ENCODE measurements at regions of chr13 and their contacts with region 1.

Region 1: DNA sequence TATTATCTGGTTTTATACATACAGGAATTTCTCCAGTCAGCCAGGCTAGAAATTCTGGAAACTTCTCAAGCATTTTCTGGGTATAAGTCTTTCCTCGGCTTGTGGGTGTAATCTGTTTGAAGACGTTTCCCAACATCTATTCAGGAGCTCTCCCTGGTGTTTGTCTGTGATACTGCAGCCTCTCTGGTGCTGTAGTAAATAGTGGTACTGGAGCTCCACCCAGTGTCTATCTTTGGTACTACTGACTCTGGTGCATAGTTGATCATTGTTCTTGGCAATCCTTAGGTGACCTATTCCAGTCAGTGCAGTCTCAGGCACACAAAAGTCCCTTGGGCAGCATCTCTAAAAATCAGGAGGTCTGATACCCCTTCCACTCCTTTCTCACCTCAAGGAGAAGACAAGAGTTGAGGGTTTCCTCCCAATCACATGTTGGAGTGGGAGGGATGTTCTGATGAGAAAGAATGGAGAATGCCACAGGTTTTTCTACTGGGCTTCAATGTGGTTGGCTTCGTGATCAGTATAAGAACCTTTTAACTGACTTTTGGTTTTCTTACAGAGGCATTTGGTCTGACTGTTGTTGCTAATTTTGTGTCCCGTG is 115.5 kb downstream of the CYSLTR2 start:
- DNase-seq: peak; percentile 88
- H3K4me3 Mint-ChIP-seq: no peak overlapping the region
- H3K27ac Mint-ChIP-seq: no peak overlapping the region
- H3K4me1 Mint-ChIP-seq: peaks cover 26% of the 10 kb centered on the region
- H3K27me3 Mint-ChIP-seq: peaks cover 26% of the 10 kb centered on the region

Region 2: DNA sequence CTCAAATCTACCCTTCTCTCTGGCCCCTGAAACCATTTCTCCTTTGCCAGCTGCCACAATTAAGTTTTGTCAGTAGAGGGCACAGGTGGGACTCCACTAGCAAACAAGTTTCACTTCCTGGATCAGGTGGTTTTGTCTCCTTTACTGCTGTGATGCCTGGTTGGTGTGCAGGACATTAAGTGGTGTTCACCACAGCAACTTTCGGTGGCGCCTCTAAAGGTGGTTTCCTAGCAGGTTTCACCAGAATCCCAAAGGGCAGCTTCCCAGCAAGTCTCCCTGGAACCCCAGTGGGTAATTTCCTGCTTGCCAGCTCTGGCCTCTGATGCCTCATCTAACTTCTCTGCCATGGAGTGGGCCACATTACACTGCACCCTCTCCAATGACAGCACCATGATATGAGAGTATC is 691.0 kb before region 1 on chr13:
- CTCF ChIA-PET with region 1: interaction called, 11 read pairs
- DNase-seq: peak; percentile 53
- H3K4me3 Mint-ChIP-seq: no peak overlapping the region
- H3K27ac Mint-ChIP-seq: peak overlapping the region; percentile 52
- H3K4me1 Mint-ChIP-seq: peaks cover 9% of the 10 kb centered on the region
- H3K27me3 Mint-ChIP-seq: no peaks in the 10 kb centered on the region

Region 3: DNA sequence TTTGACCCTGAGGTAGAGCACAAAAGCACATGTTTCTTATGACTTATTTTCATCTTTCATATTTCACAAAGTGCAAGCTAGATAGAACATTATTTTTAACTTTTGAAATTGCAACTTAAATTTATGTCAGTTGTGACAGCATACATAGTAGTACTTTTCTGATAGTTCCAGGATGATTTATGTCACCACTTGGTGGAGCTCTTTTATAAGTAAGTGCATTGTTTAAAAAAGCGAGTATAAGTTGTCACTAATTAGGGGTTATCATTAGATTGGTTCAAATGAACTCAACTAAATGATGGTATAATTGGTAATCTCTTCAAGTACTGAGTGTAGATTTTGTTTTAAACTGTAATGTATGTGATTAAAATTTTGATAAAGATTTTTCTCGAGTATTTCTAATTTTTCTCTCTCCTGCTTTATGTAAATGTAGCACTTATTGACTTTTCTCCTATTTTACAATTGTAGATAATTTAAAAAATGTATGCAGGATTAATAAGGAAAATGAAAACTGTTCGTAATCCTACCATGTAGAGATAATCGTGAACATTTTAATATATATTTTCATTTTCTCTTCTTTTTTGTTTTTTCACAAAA is 434.6 kb before region 1 on chr13:
- CTCF ChIA-PET with region 1: interaction called, 20 read pairs
- DNase-seq: no peak
- H3K4me3 Mint-ChIP-seq: no peak overlapping the region
- H3K27ac Mint-ChIP-seq: no peak overlapping the region
- H3K4me1 Mint-ChIP-seq: peaks cover 26% of the 10 kb centered on the region
- H3K27me3 Mint-ChIP-seq: no peaks in the 10 kb centered on the region

Region 4: DNA sequence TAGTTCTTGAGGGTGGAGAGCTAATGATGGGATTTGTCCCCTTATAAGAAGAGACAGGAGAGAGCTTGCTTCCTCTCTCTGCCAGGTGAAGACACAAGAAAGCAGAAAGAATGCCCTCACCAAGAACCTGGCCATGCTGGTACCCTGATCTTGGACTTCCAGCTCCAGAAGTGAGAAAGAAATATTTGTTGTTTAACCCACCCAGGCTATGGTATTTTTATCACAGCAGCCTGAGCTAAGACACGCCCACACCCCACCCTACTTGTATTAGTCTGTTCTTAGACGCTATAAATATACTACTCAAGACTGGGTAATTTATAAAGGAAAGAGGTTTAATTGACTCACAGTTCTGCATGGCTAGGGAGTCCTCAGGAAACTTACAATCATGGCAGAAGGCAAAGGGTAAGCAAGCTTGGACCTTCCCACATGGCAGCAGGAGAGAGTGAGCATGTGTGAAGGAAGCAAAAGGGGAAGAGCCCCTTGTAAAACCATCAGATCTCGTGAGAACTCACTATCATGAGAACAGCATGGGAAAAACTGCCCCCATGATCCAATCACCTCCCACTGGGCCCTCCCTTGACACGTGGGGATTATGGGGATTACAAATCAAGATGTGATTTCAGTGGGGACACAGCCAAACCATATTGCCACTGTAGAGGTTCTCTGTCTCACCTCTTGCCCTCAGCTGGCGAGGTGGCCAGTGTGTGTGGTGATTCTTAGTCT is 178.9 kb before region 1 on chr13:
- CTCF ChIA-PET with region 1: interaction called, 115 read pairs
- DNase-seq: no peak
- H3K4me3 Mint-ChIP-seq: no peak overlapping the region
- H3K27ac Mint-ChIP-seq: no peak overlapping the region
- H3K4me1 Mint-ChIP-seq: peaks cover 23% of the 10 kb centered on the region
- H3K27me3 Mint-ChIP-seq: peaks cover 22% of the 10 kb centered on the region

Region 5: GRCh38 chr13:48595431-48596429 is 173.5 kb before region 1 on chr13:
- CTCF ChIA-PET with region 1: interaction called, 115 read pairs
- DNase-seq: peak; percentile 75
- H3K4me3 Mint-ChIP-seq: no peak overlapping the region
- H3K27ac Mint-ChIP-seq: no peak overlapping the region
- H3K4me1 Mint-ChIP-seq: no peaks in the 10 kb centered on the region
- H3K27me3 Mint-ChIP-seq: peaks cover 20% of the 10 kb centered on the region

Region 6: GRCh38 chr13:48731957-48732569 is 37.1 kb before region 1 on chr13:
- CTCF ChIA-PET with region 1: interaction called, 22 read pairs
- DNase-seq: peak; percentile 70
- H3K4me3 Mint-ChIP-seq: peak overlapping the region; percentile 61
- H3K27ac Mint-ChIP-seq: no peak overlapping the region
- H3K4me1 Mint-ChIP-seq: peaks cover 7% of the 10 kb centered on the region
- H3K27me3 Mint-ChIP-seq: peaks cover 10% of the 10 kb centered on the region

Region 7: DNA sequence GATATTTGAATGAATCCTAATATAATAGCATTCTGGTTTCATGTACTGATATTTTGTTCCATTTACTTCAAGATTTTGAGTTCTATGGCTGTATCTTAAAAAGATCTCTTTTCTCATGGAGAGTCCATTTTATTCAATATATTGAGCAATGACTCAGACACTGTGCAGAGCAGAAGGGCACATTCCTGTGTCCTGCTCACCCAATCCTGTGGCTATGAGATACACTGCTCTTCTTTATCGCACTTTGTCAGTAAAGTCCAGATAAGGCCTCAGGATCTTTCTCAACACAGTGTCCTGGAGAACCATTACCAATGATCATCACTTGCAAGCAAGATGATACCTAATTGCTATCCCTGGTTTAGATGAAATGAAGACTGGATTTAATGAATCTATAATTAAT is 39.5 kb after region 1 on chr13:
- CTCF ChIA-PET with region 1: no interaction called
- DNase-seq: no peak
- H3K4me3 Mint-ChIP-seq: no peak overlapping the region
- H3K27ac Mint-ChIP-seq: no peak overlapping the region
- H3K4me1 Mint-ChIP-seq: peaks cover 25% of the 10 kb centered on the region
- H3K27me3 Mint-ChIP-seq: no peaks in the 10 kb centered on the region

Region 8: GRCh38 chr13:48819889-48820288 is 50.7 kb after region 1 on chr13:
- CTCF ChIA-PET with region 1: no interaction called
- DNase-seq: no peak
- H3K4me3 Mint-ChIP-seq: no peak overlapping the region
- H3K27ac Mint-ChIP-seq: no peak overlapping the region
- H3K4me1 Mint-ChIP-seq: peaks cover 13% of the 10 kb centered on the region
- H3K27me3 Mint-ChIP-seq: no peaks in the 10 kb centered on the region